ENCODE measurements at regions of chr13 and their contacts with region 1.

Region 1: GRCh38 chr13:32246468-32246867 is 68.7 kb downstream of the ZAR1L start:
- DNase-seq: peak; percentile 24 to 72
- ATAC-seq: peak; percentile 77 to 92 (median 87)
- H3K4me3 ChIP-seq: no peak overlapping the region
- H3K27ac ChIP-seq: peak overlapping the region in 5 of 10 donors; percentile 4 to 35 (median 13)
- H3K4me1 ChIP-seq: peaks cover 4 to 21% (median 16%) of the 10 kb centered on the region in 9 donors
- H3K27me3 ChIP-seq: no peaks in the 10 kb centered on the region
- CTCF ChIP-seq: peak in 8 of 9 donors; percentile 67 to 89 (median 78)

Region 2: GRCh38 chr13:32284927-32285632 is 38.6 kb after region 1 on chr13:
- intact Hi-C with region 1: loop called in 4 of 10 experiments (anchors 5 to 10 kb)
- DNase-seq: peak in 1 of 2 donors; percentile 79
- ATAC-seq: peak in 7 of 8 donors; percentile 56 to 81 (median 79)
- H3K4me3 ChIP-seq: no peak overlapping the region
- H3K27ac ChIP-seq: peak overlapping the region in 9 of 10 donors; percentile 52 to 84 (median 71)
- H3K4me1 ChIP-seq: peaks cover 5 to 45% (median 24%) of the 10 kb centered on the region in 9 donors
- H3K27me3 ChIP-seq: no peaks in the 10 kb centered on the region
- CTCF ChIP-seq: no peak

Region 3: DNA sequence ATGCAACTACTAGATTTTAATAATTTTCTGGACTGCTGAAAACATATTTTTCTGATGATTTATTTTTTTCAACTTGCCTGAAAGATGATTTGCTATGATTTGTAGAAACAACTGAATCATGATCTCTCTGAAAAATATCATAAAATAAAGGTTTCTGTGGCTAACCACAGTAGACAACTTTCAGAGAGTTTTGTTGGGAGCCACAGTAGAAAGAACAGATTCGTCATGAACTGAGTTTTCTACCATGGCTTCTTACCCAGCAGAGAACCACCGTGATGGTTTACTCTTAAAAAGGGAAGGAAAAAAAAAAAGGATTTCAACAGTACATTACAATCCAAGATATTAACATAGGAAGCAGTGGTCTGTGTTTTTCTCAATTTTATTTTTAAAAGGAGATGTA is 50.7 kb after region 1 on chr13:
- intact Hi-C with region 1: loop called in 2 of 10 experiments (anchors 10 kb)
- DNase-seq: no peak
- ATAC-seq: no peak
- H3K4me3 ChIP-seq: no peak overlapping the region
- H3K27ac ChIP-seq: no peak overlapping the region
- H3K4me1 ChIP-seq: peaks cover 0 to 9% (median 0%) of the 10 kb centered on the region in 9 donors
- H3K27me3 ChIP-seq: no peaks in the 10 kb centered on the region
- CTCF ChIP-seq: no peak

Region 4: DNA sequence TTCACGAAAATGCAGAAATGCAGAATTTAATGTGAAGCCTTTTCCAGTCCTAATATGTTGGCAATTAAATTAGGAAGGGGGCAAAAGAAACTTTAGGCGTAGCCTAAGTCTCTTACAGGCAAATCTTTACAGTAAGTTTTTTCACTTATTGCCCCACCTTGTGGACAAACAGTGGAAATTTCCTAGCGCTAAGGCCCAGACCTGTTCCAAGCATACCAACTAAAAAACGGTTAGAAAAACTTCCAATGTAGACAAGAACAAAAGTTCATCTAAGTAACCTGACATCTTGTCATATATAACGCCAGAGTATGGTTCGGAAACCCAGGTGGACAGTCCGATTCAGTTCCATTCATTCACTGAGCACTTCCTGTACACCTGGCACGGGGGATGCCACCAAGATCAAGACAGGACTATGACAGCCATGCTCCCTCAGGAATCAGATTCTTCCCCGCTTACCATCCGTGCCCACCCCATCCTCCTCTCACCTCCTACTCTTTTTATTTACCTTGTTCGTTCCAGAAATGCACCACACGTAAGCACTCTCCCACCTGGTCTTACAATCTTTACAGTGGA is 63.8 kb after region 1 on chr13:
- intact Hi-C with region 1: loop called (anchors 1 to 10 kb)
- DNase-seq: peak in 1 of 2 donors; percentile 13
- ATAC-seq: peak; percentile 66 to 84 (median 75)
- H3K4me3 ChIP-seq: peak overlapping the region in 7 of 10 donors; percentile 9 to 39 (median 33)
- H3K27ac ChIP-seq: peak overlapping the region in 3 of 10 donors; percentile 17 to 42 (median 23)
- H3K4me1 ChIP-seq: peaks cover 0 to 23% (median 9%) of the 10 kb centered on the region in 9 donors
- H3K27me3 ChIP-seq: no peaks in the 10 kb centered on the region
- CTCF ChIP-seq: peak; percentile 65 to 85 (median 76)

Region 5: GRCh38 chr13:34156841-34157365 is 1910.4 kb after region 1 on chr13:
- intact Hi-C with region 1: loop called in 1 of 10 experiments (anchors 5 kb)
- DNase-seq: peak; percentile 18 to 48
- ATAC-seq: peak; percentile 43 to 98 (median 92)
- H3K4me3 ChIP-seq: no peak overlapping the region
- H3K27ac ChIP-seq: peak overlapping the region in 2 of 10 donors; percentile 36 to 51
- H3K4me1 ChIP-seq: peaks cover 0 to 24% (median 17%) of the 10 kb centered on the region in 9 donors
- H3K27me3 ChIP-seq: no peaks in the 10 kb centered on the region
- CTCF ChIP-seq: no peak

Measured in heart right ventricle (tissue), 16 donors.